Sigmoid colon (tissue), 7 donors: ENCODE measurements at regions of chrX and their contacts with region 1.

Region 1: DNA sequence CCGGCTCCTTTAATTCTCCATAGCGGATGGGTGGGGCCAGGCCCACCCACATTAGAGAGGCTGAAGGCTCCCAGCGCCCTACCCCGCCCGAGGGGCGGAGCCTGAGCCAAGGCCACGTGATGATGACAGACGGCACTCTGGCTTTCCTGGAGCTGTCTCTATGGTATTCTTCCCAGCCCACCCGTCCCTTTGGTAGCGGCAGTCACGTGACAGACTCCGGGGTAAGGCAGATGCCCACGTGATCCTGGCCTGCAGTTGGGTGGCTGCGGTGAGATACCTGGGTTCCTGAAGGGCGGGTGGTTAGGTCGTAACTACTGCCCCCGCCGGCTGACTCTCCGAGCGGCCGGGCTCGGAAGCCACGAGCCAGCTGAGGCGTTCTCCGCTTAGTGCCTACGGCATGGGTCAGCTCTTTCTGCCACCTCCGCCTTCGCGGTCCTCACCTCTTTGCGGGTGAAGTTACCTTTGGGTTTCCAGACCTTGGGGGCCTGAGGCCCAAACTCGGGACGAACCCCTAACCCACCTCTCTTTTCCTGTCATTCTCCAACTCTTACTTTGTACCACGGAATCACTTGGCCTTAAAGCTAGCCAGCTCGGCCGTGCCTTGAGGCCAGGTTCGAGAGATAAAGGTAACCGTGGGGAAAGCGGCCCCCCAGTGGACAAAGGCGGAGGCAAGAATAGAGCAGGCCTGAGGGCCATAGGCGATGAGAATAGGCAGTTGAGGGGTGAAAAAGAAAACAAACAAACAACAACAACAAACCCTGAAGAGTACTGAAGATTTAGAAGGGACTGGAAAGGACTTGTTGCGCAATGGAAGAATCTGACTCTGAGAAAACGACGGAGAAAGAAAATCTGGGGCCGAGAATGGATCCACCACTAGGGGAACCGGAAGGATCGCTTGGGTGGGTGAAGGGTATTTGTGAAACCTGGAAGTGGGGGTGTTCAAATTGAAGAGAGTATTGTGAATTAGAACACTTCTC is at the start of gene RRAGB:
- DNase-seq: peak; percentile 97
- H3K4me3 ChIP-seq: peak within 1 kb of the TSS; percentile 49 to 67 (median 62)
- H3K27ac ChIP-seq: peak within 1 kb of the TSS; percentile 81 to 87 (median 84)
- H3K4me1 ChIP-seq: peaks cover 0 to 12% (median 0%) of the 10 kb centered on the region in 4 donors
- H3K27me3 ChIP-seq: no peaks in the 10 kb centered on the region
- CTCF ChIP-seq: peak in 3 of 4 experiments; percentile 45 to 57 (median 47)
- EP300 ChIP-seq: peak in 1 of 4 donors; percentile 26
- POLR2A ChIP-seq: no peak
- total RNA-seq, gene RRAGB: 10.0 to 41.4 (median 24.4) TPM

Region 2: DNA sequence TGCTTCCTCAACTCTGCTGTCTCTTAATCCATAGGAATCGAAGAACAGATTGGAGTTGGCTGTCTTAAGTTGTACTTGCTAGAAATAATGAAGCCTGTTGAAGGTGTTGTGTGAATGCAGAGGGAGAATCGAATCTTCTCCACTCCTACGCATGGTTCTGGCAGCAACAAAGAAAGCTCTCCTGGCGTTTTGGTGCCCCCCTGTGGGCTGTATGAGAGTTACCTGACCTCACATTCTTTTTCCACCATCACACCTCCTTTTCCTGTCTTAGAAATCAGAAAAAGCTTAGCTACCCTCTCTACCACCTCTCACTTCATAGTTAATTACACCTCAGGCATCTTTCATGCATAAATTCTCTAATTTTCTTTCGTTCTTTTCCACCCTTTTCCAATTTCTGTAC is 530.7 kb after region 1 on chrX:
- intact Hi-C with region 1: loop called (anchors 10 kb)
- DNase-seq: peak; percentile 69
- H3K4me3 ChIP-seq: no peak overlapping the region
- H3K27ac ChIP-seq: no peak overlapping the region
- H3K4me1 ChIP-seq: no peaks in the 10 kb centered on the region
- H3K27me3 ChIP-seq: no peaks in the 10 kb centered on the region
- CTCF ChIP-seq: peak; percentile 20 to 55 (median 42)
- EP300 ChIP-seq: no peak
- POLR2A ChIP-seq: no peak